ENCODE measurements at regions of chr16 and their contacts with region 1.

Region 1: GRCh38 chr16:50806099-50807062 is 64.5 kb downstream of the CYLD start:
- DNase-seq: peak; percentile 94
- H3K4me3 Mint-ChIP-seq: peak overlapping the region; percentile 74
- H3K27ac Mint-ChIP-seq: peak overlapping the region; percentile 51
- H3K4me1 Mint-ChIP-seq: peaks cover 10% of the 10 kb centered on the region
- H3K27me3 Mint-ChIP-seq: no peaks in the 10 kb centered on the region

Region 2: GRCh38 chr16:50065624-50066481 is 740.5 kb before region 1 on chr16 and contains the start of gene HEATR3:
- CTCF ChIA-PET with region 1: interaction called, 3 read pairs
- intact Hi-C with region 1: loop called (anchors 1 kb)
- DNase-seq: peak; percentile 96
- H3K4me3 Mint-ChIP-seq: peak within 1 kb of the TSS; percentile 86
- H3K27ac Mint-ChIP-seq: peak within 1 kb of the TSS; percentile 81
- H3K4me1 Mint-ChIP-seq: peaks cover 27% of the 10 kb centered on the region
- H3K27me3 Mint-ChIP-seq: no peaks in the 10 kb centered on the region
- total RNA-seq, gene HEATR3: 16.3 to 17.5 TPM

Region 3: DNA sequence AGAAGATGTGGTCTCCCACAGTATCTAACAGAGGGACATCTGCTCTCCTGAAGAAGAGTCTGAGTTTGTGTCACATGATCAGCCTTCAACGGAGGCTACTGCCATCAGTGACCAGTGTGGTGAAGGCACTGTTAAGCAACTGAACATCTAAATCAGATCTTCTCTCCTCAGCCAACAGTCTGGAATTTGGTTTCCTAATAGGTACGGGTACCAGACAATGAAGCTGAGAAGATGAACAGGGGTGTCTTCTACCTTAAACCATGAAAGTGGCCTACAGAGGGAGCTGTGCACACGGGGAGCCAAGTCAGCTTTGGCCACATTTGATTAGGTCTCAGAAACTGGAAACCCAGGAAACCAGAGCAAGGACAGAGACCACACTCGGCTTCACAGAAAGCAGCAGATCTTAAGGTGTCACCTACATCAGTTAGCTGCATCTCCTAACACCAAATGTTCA is 479.4 kb before region 1 on chr16:
- CTCF ChIA-PET with region 1: interaction called, 10 read pairs
- intact Hi-C with region 1: loop called (anchors 1 kb)
- DNase-seq: peak; percentile 81
- H3K4me3 Mint-ChIP-seq: no peak overlapping the region
- H3K27ac Mint-ChIP-seq: peak overlapping the region; percentile 50
- H3K4me1 Mint-ChIP-seq: peaks cover 56% of the 10 kb centered on the region
- H3K27me3 Mint-ChIP-seq: no peaks in the 10 kb centered on the region

Region 4: GRCh38 chr16:50548125-50548908 is 258.1 kb before region 1 on chr16 and contains the start of gene NKD1:
- CTCF ChIA-PET with region 1: interaction called, 5 read pairs
- intact Hi-C with region 1: loop called (anchors 1 kb)
- DNase-seq: peak; percentile 68
- H3K4me3 Mint-ChIP-seq: peak within 1 kb of the TSS; percentile 85
- H3K27ac Mint-ChIP-seq: no peak within 1 kb of the TSS
- H3K4me1 Mint-ChIP-seq: peaks cover 18% of the 10 kb centered on the region
- H3K27me3 Mint-ChIP-seq: no peaks in the 10 kb centered on the region
- total RNA-seq, gene NKD1: 2.6 to 3.2 TPM

Region 5: DNA sequence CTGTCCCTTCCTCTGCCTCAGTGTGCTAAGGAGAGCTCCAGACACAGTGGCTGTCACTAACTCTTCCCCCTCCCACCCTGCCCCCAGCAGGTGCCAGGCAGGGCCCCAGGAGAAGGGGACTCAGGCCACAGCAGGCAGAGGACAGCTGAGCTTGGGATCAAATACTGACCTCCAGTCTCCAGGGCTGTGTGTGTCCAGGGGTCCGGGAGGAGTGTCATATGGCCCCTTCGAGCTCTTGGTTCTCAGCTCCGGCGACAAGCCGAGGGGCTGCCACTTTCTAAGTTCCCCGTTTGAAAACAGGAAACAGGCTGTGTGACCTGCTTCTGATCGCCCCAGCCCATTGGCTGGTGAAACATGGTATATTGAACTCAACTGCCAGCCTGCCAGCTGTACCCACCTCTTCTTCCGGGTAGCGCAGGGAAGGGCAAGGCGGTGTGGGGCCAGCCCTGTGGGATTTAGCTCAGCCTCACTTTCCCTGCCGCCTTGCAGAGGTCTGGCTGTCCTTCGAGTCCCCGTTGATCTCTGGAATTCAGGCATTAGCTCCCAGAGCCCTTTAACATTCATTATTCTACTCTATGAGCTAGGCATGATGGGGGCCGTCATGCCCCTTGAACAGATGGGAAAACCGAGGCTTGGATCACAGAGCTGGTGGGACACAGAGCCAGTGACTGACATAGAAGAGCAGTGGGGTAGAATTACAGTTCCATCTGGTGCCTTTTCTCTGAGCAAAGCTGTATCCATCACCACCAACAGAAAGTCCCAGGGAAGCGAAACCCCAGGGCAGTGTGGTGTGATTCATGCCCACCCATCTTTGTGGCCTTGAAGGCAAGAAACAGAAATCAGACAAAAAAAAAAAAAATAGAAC is 125.1 kb before region 1 on chr16 and contains the start of gene SNX20:
- CTCF ChIA-PET with region 1: interaction called, 347 read pairs
- intact Hi-C with region 1: no loop called
- DNase-seq: peak; percentile 78
- H3K4me3 Mint-ChIP-seq: peak within 1 kb of the TSS; percentile 83
- H3K27ac Mint-ChIP-seq: peak within 1 kb of the TSS; percentile 93
- H3K4me1 Mint-ChIP-seq: peaks cover 81% of the 10 kb centered on the region
- H3K27me3 Mint-ChIP-seq: no peaks in the 10 kb centered on the region
- total RNA-seq, gene SNX20: 29.6 to 30.3 TPM

Region 6: DNA sequence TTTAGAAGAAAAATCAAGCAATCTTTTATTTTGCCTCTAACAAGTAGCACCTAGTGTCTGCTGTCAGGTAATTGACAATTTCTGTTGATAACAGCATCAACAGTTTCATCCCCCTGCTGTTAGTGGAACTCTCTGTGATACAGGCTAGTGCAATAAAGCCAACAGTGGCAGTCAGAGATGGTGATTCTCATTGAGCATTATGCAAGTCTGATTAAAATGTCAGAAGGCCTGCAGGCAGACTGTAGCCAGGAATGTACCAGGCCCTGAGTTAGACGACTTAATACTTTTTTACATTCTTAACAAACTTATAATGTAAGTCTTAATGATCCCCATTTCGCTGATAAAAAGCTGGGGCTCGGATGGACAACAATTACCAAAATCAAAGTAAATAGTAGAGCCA is 49.9 kb before region 1 on chr16:
- CTCF ChIA-PET with region 1: interaction called, 33 read pairs
- intact Hi-C with region 1: no loop called
- DNase-seq: no peak
- H3K4me3 Mint-ChIP-seq: no peak overlapping the region
- H3K27ac Mint-ChIP-seq: peak overlapping the region; percentile 10
- H3K4me1 Mint-ChIP-seq: peaks cover 68% of the 10 kb centered on the region
- H3K27me3 Mint-ChIP-seq: no peaks in the 10 kb centered on the region

Region 7: GRCh38 chr16:50842589-50842988 is 36.2 kb after region 1 on chr16:
- CTCF ChIA-PET with region 1: no interaction called
- intact Hi-C with region 1: no loop called
- DNase-seq: peak; percentile 31
- H3K4me3 Mint-ChIP-seq: no peak overlapping the region
- H3K27ac Mint-ChIP-seq: no peak overlapping the region
- H3K4me1 Mint-ChIP-seq: peaks cover 19% of the 10 kb centered on the region
- H3K27me3 Mint-ChIP-seq: peaks cover 4% of the 10 kb centered on the region

Measured in activated naive CD4-positive, alpha-beta T cell treated with anti-CD3 and anti-CD28 coated beads for 36 hours (primary cell).